ENCODE measurements at regions of chr3 and their contacts with region 1.

Region 1: GRCh38 chr3:41893977-41894376 is 67.9 kb downstream of the ULK4 start:
- DNase-seq: peak in 1 of 3 donors; percentile 57
- ATAC-seq: no peak
- H3K4me3 ChIP-seq: no peak overlapping the region
- H3K4me1 ChIP-seq: no peaks in the 10 kb centered on the region
- CTCF ChIP-seq: no peak

Region 2: GRCh38 chr3:41178576-41178975 is 715.4 kb before region 1 on chr3:
- intact Hi-C with region 1: no loop called
- DNase-seq: no peak
- ATAC-seq: no peak
- H3K4me3 ChIP-seq: no peak overlapping the region
- H3K4me1 ChIP-seq: peaks cover 3% of the 10 kb centered on the region
- CTCF ChIP-seq: no peak

Region 3: DNA sequence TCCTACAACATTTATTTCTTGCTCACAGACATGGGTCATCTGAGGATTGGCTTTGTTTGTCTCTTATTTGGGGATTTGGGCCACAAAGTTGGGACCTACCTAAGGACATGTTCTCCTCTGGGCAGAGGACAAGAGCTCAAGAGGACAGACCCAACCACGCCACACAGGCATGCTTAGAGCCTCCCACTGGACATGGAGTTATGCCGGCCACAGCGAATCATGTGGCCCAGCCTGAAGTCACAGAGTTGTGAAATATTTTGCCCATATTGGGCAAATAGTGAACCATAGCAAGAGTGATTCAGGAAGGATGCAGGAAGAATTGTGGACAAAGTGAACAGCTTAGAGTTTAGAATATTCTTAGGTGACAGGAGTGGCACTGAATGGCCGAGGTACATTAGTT is 207.1 kb after region 1 on chr3:
- intact Hi-C with region 1: loop called (anchors 2 to 5 kb)
- DNase-seq: no peak
- ATAC-seq: peak; percentile 35
- H3K4me3 ChIP-seq: no peak overlapping the region
- H3K4me1 ChIP-seq: peaks cover 3% of the 10 kb centered on the region
- CTCF ChIP-seq: no peak

Region 4: DNA sequence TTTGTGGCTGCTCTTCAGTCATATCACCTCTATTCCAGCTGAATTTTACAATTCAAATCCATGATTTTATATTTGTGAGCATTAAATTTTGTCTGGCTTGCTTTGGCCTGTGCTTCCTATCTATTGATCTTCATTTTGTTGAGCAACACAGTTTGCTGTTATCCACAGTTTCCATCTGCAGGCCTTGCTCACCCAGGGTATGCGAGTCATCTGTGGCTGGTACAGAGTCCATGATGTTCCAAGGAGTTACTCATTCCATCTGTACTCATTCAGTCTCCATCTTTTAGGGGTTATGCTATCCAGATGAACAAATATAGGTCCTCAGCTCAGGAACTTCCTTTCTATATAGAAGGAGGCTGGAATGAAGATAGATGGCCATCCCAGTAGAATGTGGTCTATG is 442.1 kb after region 1 on chr3:
- intact Hi-C with region 1: no loop called
- DNase-seq: no peak
- ATAC-seq: no peak
- H3K4me3 ChIP-seq: no peak overlapping the region
- H3K4me1 ChIP-seq: no peaks in the 10 kb centered on the region
- CTCF ChIP-seq: no peak

Measured in mucosa of descending colon (tissue), 3 donors.